ENCODE measurements at regions of chr22 and their contacts with region 1.

Region 1: GRCh38 chr22:43570531-43571165 is 158.8 kb downstream of the MPPED1 start:
- DNase-seq: no peak
- H3K4me3 ChIP-seq: no peak overlapping the region
- H3K27ac ChIP-seq: no peak overlapping the region
- H3K4me1 ChIP-seq: no peaks in the 10 kb centered on the region
- H3K27me3 ChIP-seq: no peaks in the 10 kb centered on the region
- CTCF ChIP-seq: no peak

Region 2: DNA sequence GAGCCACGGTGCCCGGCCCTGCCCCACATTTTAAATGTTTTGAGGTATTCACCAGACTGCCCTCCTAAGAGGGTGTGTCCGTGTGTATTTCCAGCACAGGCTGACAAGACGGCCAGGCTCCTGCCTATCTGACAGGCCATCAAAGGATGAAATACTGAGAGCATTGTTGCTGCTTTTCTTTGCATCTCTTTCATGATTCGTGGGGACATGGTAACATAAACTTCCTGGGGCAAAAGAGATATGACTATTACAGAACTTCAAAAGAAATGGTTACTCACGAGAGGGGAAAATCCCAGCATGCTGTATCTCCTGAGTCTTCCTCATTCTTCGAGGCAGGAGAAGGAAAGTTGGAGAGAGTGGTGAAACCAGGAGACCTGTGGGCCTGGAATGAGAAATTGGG is 470.4 kb before region 1 on chr22:
- CTCF ChIA-PET with region 1: no interaction called
- dilution Hi-C with region 1: no loop called
- in situ Hi-C with region 1: no loop called
- intact Hi-C with region 1: no loop called
- DNase-seq: peak; percentile 53
- H3K4me3 ChIP-seq: no peak overlapping the region
- H3K27ac ChIP-seq: no peak overlapping the region
- H3K4me1 ChIP-seq: peaks cover 4% of the 10 kb centered on the region
- H3K27me3 ChIP-seq: no peaks in the 10 kb centered on the region
- CTCF ChIP-seq: no peak

Region 3: DNA sequence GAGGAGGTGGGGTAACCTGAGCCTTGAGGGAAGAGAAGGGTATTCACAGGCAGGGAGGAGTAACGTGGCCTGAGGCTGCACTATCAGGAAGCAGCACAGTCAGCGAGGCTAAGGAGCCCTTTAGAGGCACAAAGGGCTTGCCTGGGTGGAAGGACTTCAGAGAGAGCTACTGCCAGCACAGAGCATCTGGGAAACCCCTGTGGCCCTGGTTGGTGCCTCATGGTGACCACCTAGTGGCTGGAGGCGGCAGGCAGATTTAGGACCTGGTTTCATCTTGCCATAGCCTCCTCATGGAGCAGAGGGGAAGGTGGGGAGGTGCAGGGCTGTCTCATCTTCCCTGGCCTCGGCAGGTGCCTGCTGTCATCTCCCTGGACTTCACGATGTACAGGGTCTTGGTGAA is 94.3 kb before region 1 on chr22:
- CTCF ChIA-PET with region 1: no interaction called
- dilution Hi-C with region 1: loop called (anchors 5 kb)
- in situ Hi-C with region 1: no loop called
- intact Hi-C with region 1: no loop called
- DNase-seq: no peak
- H3K4me3 ChIP-seq: no peak overlapping the region
- H3K27ac ChIP-seq: no peak overlapping the region
- H3K4me1 ChIP-seq: no peaks in the 10 kb centered on the region
- H3K27me3 ChIP-seq: no peaks in the 10 kb centered on the region
- CTCF ChIP-seq: no peak

Region 4: GRCh38 chr22:43537014-43537585 is 33.5 kb before region 1 on chr22:
- CTCF ChIA-PET with region 1: interaction called, 10 read pairs
- dilution Hi-C with region 1: no loop called
- in situ Hi-C with region 1: no loop called
- intact Hi-C with region 1: no loop called
- DNase-seq: no peak
- H3K4me3 ChIP-seq: no peak overlapping the region
- H3K27ac ChIP-seq: no peak overlapping the region
- H3K4me1 ChIP-seq: peaks cover 28% of the 10 kb centered on the region
- H3K27me3 ChIP-seq: no peaks in the 10 kb centered on the region
- CTCF ChIP-seq: peak; percentile 25 to 31

Region 5: GRCh38 chr22:43553451-43554258 is 17.0 kb before region 1 on chr22:
- CTCF ChIA-PET with region 1: interaction called, 12 read pairs
- dilution Hi-C with region 1: no loop called
- in situ Hi-C with region 1: no loop called
- intact Hi-C with region 1: no loop called
- DNase-seq: no peak
- H3K4me3 ChIP-seq: no peak overlapping the region
- H3K27ac ChIP-seq: no peak overlapping the region
- H3K4me1 ChIP-seq: no peaks in the 10 kb centered on the region
- H3K27me3 ChIP-seq: no peaks in the 10 kb centered on the region
- CTCF ChIP-seq: no peak

Region 6: GRCh38 chr22:43628250-43628649 is 57.6 kb after region 1 on chr22:
- CTCF ChIA-PET with region 1: no interaction called
- dilution Hi-C with region 1: no loop called
- in situ Hi-C with region 1: no loop called
- intact Hi-C with region 1: no loop called
- DNase-seq: no peak
- H3K4me3 ChIP-seq: no peak overlapping the region
- H3K27ac ChIP-seq: no peak overlapping the region
- H3K4me1 ChIP-seq: no peaks in the 10 kb centered on the region
- H3K27me3 ChIP-seq: no peaks in the 10 kb centered on the region
- CTCF ChIP-seq: no peak

Region 7: GRCh38 chr22:43945632-43946383 is 375.2 kb after region 1 on chr22:
- CTCF ChIA-PET with region 1: no interaction called
- dilution Hi-C with region 1: no loop called
- in situ Hi-C with region 1: no loop called
- intact Hi-C with region 1: no loop called
- DNase-seq: peak; percentile 36
- H3K4me3 ChIP-seq: no peak overlapping the region
- H3K27ac ChIP-seq: no peak overlapping the region
- H3K4me1 ChIP-seq: no peaks in the 10 kb centered on the region
- H3K27me3 ChIP-seq: no peaks in the 10 kb centered on the region
- CTCF ChIP-seq: peak; percentile 80 to 87

Measured in mammary epithelial cell (primary cell).